AG04450 (cell line): ENCODE measurements at regions of chr19 and their contacts with region 1.

Region 1: DNA sequence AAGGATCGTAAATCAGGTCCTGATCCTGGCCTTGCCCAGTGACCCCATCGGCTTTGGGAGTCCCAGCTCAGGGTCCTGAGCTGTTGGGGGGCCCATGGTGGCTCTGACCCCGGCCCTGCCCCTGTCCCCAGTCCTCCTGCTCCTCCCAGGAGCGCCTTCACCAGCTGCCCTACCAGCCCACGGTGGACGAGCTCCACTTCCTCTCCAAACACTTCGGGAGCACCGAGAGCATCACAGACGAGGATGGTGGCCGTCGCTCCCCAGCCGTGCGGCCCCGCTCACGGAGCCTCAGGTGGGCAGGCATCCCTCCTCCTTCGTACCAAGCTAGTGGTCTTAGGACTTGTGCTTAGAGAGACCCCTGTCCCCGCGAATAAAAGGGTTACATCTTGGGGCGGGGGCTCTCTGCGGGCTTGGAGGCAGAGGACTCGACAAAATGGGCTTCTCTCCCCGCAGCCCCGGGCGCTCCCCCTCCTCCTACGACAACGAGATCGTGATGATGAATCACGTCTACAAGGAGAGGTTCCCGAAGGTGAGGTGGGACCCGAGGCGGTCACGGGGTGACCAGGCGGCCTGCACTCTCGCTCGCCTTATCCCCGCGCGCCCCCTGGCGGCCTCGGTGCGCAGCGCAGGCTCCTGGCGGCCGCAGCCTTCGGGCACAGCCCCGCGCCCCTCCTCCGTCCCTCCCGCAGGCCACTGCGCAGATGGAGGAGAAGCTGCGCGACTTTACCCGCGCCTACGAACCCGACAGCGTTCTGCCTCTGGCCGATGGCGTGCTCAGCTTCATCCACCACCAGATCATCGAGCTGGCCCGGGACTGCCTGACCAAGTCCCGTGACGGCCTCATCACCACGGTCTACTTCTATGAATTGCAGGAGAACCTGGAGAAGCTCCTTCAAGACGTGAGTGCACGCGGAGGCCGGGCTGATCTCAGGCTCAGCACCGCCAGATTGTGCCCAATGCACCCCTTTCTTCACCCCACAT is 9.1 kb downstream of the MAST1 start:
- DNase-seq: no peak
- H3K4me3 ChIP-seq: peak overlapping the region; percentile 42
- H3K27ac ChIP-seq: no peak overlapping the region
- H3K27me3 ChIP-seq: peaks cover 12% of the 10 kb centered on the region
- CTCF ChIP-seq: peak; percentile 88

Region 2: DNA sequence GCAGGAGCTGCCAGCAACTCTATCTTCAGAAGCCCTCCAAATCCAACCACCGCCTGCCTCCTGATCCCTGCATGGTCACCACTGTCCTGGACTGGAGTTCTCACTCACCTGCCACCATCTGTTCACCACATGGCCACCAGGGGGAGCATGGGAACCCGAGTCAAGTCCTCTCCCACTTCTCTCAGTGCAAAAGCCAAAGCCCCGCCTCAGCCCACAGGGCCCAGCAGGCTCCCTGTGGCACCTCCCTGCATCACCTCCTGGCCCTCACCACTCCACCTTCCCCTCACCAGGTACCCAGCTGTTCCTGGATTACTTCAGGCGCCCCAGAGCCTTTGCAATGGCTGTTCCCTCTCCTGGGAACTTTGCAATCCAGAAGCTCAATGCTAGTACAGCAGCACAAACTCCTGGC is 171.1 kb before region 1 on chr19:
- CTCF ChIA-PET with region 1: interaction called, 20 read pairs
- POLR2A ChIA-PET with region 1: no interaction called
- DNase-seq: peak; percentile 27
- H3K4me3 ChIP-seq: no peak overlapping the region
- H3K27ac ChIP-seq: no peak overlapping the region
- H3K27me3 ChIP-seq: no peaks in the 10 kb centered on the region
- CTCF ChIP-seq: peak; percentile 83

Region 3: GRCh38 chr19:12757544-12758274 is 89.7 kb before region 1 on chr19:
- CTCF ChIA-PET with region 1: interaction called, 247 read pairs
- POLR2A ChIA-PET with region 1: no interaction called
- DNase-seq: no peak
- H3K4me3 ChIP-seq: peak overlapping the region; percentile 53
- H3K27ac ChIP-seq: no peak overlapping the region
- H3K27me3 ChIP-seq: peaks cover 3% of the 10 kb centered on the region
- CTCF ChIP-seq: peak; percentile 76

Region 4: GRCh38 chr19:12806239-12807081 is 41.0 kb before region 1 on chr19 and contains the start of gene RNASEH2A:
- CTCF ChIA-PET with region 1: interaction called, 11 read pairs
- POLR2A ChIA-PET with region 1: no interaction called
- DNase-seq: peak; percentile 63
- H3K4me3 ChIP-seq: peak within 1 kb of the TSS; percentile 83
- H3K27ac ChIP-seq: no peak within 1 kb of the TSS
- H3K27me3 ChIP-seq: no peaks in the 10 kb centered on the region
- CTCF ChIP-seq: no peak
- polyA plus RNA-seq, gene RNASEH2A: 11.6 and 11.7 TPM in 2 replicates

Region 5: DNA sequence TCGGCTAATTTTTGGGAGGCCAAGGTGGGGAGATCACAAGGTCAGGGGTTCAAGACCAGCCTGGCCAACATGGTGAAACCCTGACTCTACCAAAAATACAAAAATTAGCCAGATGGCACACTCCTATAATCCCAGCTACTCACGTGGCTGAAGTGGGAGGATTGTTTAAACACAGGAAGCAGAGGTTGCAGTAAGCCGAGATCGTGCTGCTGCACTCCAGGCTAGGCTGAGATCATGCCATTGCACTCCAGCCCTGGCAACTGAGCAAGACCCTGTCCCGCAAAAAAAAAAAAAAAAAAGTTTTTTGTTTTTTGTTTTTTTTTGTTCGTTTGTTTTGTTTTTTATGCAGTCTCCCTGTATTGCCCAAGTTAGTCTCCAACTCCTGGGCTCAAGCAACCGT is 12.1 kb after region 1 on chr19:
- CTCF ChIA-PET with region 1: interaction called, 13 read pairs
- POLR2A ChIA-PET with region 1: interaction called, 3 read pairs
- DNase-seq: no peak
- H3K4me3 ChIP-seq: no peak overlapping the region
- H3K27ac ChIP-seq: no peak overlapping the region
- H3K27me3 ChIP-seq: peaks cover 4% of the 10 kb centered on the region
- CTCF ChIP-seq: no peak

Region 6: DNA sequence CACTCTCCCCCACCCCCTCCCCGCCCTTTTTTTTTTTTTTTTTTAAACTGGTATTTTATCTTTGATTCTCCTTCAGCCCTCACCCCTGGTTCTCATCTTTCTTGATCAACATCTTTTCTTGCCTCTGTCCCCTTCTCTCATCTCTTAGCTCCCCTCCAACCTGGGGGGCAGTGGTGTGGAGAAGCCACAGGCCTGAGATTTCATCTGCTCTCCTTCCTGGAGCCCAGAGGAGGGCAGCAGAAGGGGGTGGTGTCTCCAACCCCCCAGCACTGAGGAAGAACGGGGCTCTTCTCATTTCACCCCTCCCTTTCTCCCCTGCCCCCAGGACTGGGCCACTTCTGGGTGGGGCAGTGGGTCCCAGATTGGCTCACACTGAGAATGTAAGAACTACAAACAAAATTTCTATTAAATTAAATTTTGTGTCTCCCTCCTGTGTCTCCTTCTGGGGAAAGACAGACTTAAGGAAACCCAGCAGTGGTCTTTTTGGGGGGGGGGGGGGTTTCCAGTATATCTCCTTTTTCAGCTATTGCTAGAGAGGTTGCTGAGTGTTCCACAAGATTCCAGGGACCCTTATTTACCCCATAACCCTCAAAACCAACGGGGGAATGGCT is 96.7 kb after region 1 on chr19:
- CTCF ChIA-PET with region 1: no interaction called
- POLR2A ChIA-PET with region 1: no interaction called
- DNase-seq: no peak
- H3K4me3 ChIP-seq: no peak overlapping the region
- H3K27ac ChIP-seq: peak overlapping the region; percentile 21
- H3K27me3 ChIP-seq: no peaks in the 10 kb centered on the region
- CTCF ChIP-seq: no peak